A549 (cell line): ENCODE measurements at regions of chr15 and their contacts with region 1.

Region 1: DNA sequence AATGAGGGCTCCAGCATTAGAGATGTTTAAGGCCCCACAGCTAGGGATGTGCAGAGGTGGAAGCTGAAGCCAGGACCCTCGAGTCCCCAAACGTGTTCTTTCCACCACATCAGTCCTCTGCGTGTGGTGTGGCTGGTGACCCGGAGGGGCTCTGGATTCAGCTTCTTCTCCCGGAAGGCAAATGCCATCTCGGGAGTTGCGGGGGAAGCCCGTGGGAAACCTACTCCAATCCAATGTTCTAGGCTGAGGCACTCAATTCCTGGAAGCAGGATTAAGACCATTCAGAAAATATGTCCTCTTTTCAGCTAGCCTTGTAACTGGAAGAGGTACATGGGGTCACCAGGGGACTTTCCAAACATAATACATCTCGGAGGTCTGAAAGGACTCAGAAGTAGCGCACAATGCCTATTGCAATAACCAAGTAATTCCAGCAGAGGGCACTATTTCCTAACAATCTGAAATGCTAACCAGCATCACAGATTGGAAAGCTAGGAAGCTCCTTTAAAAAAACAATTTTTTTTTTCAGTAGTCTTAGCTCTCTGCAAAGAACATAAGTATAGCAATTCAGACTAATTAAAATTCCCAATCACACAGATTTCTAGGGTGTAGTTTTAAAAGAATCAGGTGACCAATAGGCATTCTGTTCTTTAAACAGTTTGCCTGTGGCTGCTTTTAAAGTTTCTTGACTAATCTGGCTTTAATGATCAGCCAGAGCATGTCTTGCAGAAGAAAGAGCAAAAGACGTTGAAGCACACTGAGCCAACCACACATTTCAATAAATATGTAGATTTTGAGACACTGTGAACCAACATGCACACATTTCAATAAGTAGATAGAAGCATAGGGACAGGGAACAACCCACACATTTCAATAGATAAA is 36.1 kb downstream of the BNC1 start:
- DNase-seq: peak; percentile 18 to 71
- ATAC-seq: peak; percentile 79 to 93
- H3K4me3 ChIP-seq: no peak overlapping the region
- H3K27ac ChIP-seq: peak overlapping the region in 1 of 2 experiments; percentile 10; a peak in 1 of 6 replicates
- H3K4me1 ChIP-seq: no peaks in the 10 kb centered on the region
- CTCF ChIP-seq: peak; percentile 98
- EP300 ChIP-seq: no peak
- POLR2A ChIP-seq: no peak
- RAD21 ChIP-seq: peak; percentile 97 to 98

Region 2: DNA sequence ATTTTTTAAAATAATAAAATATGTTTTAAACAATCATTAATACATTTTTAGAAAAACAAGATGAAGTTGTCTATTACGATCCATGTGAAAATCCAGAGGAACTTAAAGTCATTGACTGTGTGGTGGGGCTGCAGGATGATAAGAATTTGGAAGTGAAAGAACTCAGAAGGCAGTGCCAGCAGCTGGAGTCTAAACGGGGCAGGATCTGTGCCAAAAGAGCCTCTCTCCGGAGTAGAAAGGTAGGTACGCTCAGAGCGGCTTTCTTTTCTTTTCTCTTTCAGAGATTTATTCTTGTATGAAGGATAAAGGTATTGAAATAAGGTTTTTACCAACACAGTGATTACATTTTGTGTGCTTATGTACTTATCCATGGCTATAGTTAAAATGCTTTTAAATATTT is 425.3 kb before region 1 on chr15:
- CTCF ChIA-PET with region 1: no interaction called
- POLR2A ChIA-PET with region 1: no interaction called
- DNase-seq: no peak
- ATAC-seq: no peak
- H3K4me3 ChIP-seq: no peak overlapping the region
- H3K27ac ChIP-seq: no peak overlapping the region
- H3K4me1 ChIP-seq: peaks cover 4% of the 10 kb centered on the region; the same call in 2 of the 3 replicates
- CTCF ChIP-seq: no peak
- EP300 ChIP-seq: no peak
- POLR2A ChIP-seq: no peak
- RAD21 ChIP-seq: no peak

Region 3: GRCh38 chr15:83278173-83278572 is 29.8 kb after region 1 on chr15:
- CTCF ChIA-PET with region 1: interaction called, 40 read pairs
- POLR2A ChIA-PET with region 1: no interaction called
- DNase-seq: peak in 1 of 2 experiments; percentile 72
- ATAC-seq: peak; percentile 74 to 86; a peak in 4 of 6 replicates
- H3K4me3 ChIP-seq: no peak overlapping the region
- H3K27ac ChIP-seq: no peak overlapping the region
- H3K4me1 ChIP-seq: no peaks in the 10 kb centered on the region
- CTCF ChIP-seq: no peak
- EP300 ChIP-seq: no peak
- POLR2A ChIP-seq: no peak
- RAD21 ChIP-seq: no peak

Region 4: DNA sequence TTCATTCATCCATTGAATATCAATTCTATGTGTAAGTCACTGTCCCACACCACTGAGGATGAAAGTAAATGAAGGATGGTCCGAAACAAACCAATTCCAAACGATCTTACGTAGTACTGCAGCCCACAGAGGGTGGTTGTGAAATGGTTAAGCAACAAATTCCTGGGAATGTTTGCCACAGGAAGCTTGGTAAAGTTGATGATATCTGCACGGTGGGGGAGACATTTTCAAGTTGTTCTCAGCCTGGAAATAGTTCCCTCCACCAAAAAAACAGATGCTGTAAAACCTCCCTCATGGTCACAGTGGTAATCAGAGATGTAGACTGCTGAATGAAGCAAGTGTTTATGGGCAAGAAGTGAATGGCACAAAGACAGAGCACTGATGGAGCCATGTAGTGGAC is 72.0 kb after region 1 on chr15:
- CTCF ChIA-PET with region 1: interaction called, 13 read pairs
- POLR2A ChIA-PET with region 1: no interaction called
- DNase-seq: peak in 1 of 2 experiments; percentile 42
- ATAC-seq: no peak
- H3K4me3 ChIP-seq: no peak overlapping the region
- H3K27ac ChIP-seq: peak overlapping the region; percentile 31 to 36; a peak in 5 of 6 replicates
- H3K4me1 ChIP-seq: peaks cover 34% of the 10 kb centered on the region
- CTCF ChIP-seq: no peak
- EP300 ChIP-seq: no peak
- POLR2A ChIP-seq: no peak
- RAD21 ChIP-seq: no peak

Region 5: DNA sequence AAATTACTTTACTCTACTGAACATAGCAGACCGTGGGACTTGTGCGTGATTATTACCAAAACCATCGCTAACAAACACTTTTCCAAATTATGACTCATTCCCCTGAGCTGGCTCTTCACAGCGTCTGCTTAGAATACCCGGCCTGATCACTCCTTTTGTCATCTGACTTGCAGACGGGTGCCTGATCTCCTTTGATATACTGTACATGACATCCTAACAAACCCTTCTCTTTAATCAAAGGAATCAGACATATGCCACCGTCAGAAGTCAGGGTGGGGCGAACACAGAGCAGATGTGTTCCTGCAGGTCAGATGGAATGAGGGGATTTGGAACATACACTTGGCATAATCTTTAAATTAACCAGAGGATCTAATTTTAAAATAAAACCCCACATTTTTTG is 150.2 kb after region 1 on chr15:
- CTCF ChIA-PET with region 1: interaction called, 17 read pairs
- POLR2A ChIA-PET with region 1: no interaction called
- DNase-seq: no peak
- ATAC-seq: no peak
- H3K4me3 ChIP-seq: no peak overlapping the region
- H3K27ac ChIP-seq: no peak overlapping the region
- H3K4me1 ChIP-seq: no peaks in the 10 kb centered on the region
- CTCF ChIP-seq: no peak
- EP300 ChIP-seq: no peak
- POLR2A ChIP-seq: no peak
- RAD21 ChIP-seq: no peak

Region 6: DNA sequence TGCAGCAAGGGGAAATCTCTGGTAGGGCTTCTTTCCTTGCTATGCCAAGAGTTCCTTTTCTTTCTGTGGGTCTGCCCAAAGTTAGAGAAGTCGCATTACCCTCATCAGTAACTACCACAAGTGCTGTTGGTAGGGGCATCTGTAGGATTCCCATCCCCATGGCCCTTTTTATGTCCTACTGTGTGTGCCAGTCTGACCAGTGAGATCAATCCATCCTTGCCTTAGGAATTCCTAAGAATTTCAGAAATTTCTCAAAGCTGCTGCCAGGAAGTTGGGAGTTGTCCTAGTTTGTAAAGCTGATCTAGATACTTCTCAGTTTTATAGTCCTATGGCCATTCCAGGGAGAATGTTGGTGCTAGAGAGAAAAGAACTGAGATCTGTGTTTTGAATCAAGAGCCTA is 235.2 kb after region 1 on chr15:
- CTCF ChIA-PET with region 1: interaction called, 11 read pairs
- POLR2A ChIA-PET with region 1: no interaction called
- DNase-seq: no peak
- ATAC-seq: no peak
- H3K4me3 ChIP-seq: no peak overlapping the region
- H3K27ac ChIP-seq: no peak overlapping the region
- H3K4me1 ChIP-seq: no peaks in the 10 kb centered on the region
- CTCF ChIP-seq: no peak
- EP300 ChIP-seq: no peak
- POLR2A ChIP-seq: no peak
- RAD21 ChIP-seq: no peak

Region 7: GRCh38 chr15:83559310-83559966 is 311.0 kb after region 1 on chr15:
- CTCF ChIA-PET with region 1: interaction called, 219 read pairs
- POLR2A ChIA-PET with region 1: interaction called, 3 read pairs
- DNase-seq: peak; percentile 70 to 76
- ATAC-seq: peak; percentile 86 to 98
- H3K4me3 ChIP-seq: no peak overlapping the region
- H3K27ac ChIP-seq: no peak overlapping the region
- H3K4me1 ChIP-seq: no peaks in the 10 kb centered on the region
- CTCF ChIP-seq: peak; percentile 94
- EP300 ChIP-seq: no peak
- POLR2A ChIP-seq: no peak
- RAD21 ChIP-seq: peak; percentile 92 to 95